Cardiac septum (tissue), 1 donor: ENCODE measurements at regions of chr16 and their contacts with region 1.

Region 1: DNA sequence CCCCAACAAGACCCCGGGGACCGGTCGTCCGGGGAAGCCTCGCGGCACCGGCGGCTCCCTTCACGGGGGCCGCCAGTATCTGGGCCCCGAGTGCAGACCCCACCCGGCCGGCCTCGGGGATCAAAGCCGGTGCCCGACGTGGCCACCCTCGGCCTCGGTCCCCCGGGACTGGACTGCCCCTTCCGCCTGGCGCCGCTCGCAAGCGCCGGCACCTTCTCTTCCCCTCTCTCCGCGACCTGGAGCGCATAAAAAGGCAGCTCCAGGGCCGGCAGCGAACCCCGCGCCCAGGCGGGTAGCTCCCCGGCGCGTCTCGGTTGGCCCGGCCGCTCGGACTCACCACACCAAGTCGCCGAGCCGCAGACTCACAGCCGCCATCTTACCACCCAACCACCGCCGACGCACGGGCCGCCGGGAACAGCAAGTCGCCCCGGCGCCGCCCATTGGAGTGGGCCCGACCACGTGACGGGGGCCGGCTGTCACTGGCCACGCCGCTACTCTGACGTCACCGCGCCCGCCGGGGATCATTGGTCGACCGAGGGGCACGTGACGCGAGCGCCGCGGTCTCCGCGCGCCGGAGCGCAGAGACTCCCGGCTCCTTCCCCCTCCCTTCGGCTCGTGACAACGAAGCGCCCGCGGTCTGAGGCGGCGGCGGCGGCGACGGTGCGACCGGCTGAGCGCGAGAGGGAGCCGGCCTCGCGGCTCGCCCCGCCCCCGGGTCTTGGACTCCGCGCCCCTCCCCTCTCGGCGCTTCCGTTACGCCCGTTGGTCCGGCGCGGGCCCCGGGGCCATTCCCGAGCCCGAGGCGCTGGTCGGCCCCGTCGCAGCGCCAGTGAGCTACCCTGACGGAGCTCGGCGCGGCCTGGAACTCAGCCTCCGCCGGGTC is at the starts of genes GLYR1 and UBN1:
- DNase-seq: peak; percentile 100
- total RNA-seq, gene GLYR1: 64.9 TPM
- total RNA-seq, gene UBN1: 23.6 TPM

Region 2: DNA sequence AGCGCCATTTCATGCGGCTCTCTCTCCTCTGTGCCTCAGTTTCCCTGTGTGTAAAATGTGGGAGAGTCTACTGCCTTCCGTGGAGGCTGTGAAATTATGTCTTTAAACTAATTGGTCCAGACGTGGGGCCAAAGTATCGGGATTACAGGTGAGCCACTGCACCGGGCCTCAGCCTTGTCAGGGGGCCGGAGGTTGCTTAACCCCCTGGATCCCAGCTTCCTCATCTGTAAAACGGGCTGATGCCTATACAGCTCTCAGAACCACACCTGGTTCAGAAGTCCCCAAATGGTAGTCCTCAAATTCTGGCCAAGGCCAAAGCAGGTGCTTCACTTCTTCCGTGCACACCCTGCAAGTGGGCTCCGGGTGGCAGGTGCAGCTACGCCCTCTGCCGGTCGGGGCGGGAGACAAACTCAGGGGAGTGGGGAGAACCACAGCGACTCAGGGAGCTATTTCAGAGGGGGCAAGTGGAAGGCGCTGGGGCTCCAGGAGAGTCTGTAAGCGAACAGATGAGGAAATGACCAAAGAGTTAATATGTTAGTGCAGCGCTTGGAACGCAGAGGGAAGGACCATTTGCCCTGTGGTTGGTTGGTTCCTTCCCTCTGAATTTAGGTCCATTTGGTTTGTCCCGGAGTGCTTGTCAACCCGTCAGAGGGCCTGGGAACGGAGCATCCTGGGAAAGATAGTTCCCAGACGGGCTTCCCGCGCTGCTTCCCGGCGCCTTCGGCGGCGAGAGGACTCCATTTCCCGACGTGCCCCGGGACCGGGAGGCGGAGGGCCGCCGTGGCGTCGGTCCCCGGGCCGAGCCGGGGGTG is 222.9 kb before region 1 on chr16 and contains the start of gene MGRN1:
- intact Hi-C with region 1: loop called (anchors 10 kb)
- DNase-seq: peak; percentile 97
- total RNA-seq, gene MGRN1: 45.3 TPM

Region 3: DNA sequence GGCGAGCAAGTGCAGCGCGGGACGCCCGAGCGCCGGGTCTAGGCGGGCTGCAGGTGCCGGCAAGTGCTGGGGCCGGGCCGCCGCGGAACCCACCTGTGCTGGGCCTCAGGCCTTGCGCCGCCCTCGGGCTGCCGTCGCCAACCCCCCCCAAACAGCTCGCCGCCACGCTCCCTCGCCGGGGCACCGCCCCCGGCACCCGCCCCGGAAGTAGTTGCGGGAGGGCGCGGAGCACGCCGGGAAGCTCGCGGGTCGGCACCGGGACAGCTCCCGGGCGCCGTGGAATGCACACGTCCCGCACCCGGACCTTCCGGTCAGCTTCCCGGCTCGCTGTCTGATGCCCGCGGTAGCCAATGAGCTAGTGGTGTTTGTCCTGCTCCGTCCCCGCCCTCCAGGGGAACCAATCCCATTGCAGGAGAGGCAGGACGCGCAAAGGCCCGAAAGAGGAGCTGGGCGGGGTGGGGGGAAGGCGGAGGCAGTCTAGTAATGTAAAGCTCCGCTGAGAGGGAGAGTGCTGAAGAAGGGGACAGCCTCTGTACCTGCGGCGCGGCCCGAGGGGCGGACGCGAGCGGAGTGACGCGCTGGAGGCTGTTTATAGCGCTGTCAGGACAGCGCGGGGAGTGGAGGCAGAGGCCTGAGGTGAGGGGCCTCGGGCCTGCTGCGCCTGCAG is 112.9 kb before region 1 on chr16 and contains the starts of genes ANKS3 and DNAAF8:
- intact Hi-C with region 1: loop called (anchors 10 kb)
- DNase-seq: peak; percentile 97
- total RNA-seq, gene ANKS3: 9.9 TPM
- total RNA-seq, gene DNAAF8: 0.65 TPM

Region 4: GRCh38 chr16:4766874-4767628 is 80.1 kb before region 1 on chr16 and contains the start of gene ZNF500:
- intact Hi-C with region 1: loop called (anchors 2 kb)
- DNase-seq: peak; percentile 99
- total RNA-seq, gene ZNF500: 7.2 TPM

Region 5: GRCh38 chr16:4802659-4803287 is 44.4 kb before region 1 on chr16:
- intact Hi-C with region 1: loop called (anchors 1 kb)
- DNase-seq: peak; percentile 96

Region 6: GRCh38 chr16:5071681-5072333 is 224.7 kb after region 1 on chr16 and contains the start of gene ALG1:
- intact Hi-C with region 1: loop called (anchors 5 kb)
- DNase-seq: peak; percentile 96
- total RNA-seq, gene ALG1: 8.0 TPM